ENCODE measurements at regions of chr6 and their contacts with region 1.

Region 1: GRCh38 chr6:4210629-4211423 is 75.5 kb upstream of the ECI2 start:
- DNase-seq: peak; percentile 80
- ATAC-seq: peak; percentile 93
- H3K4me3 ChIP-seq: no peak overlapping the region
- H3K27ac ChIP-seq: no peak overlapping the region
- H3K4me1 ChIP-seq: no peaks in the 10 kb centered on the region
- H3K27me3 ChIP-seq: no peaks in the 10 kb centered on the region
- CTCF ChIP-seq: peak; percentile 79

Region 2: DNA sequence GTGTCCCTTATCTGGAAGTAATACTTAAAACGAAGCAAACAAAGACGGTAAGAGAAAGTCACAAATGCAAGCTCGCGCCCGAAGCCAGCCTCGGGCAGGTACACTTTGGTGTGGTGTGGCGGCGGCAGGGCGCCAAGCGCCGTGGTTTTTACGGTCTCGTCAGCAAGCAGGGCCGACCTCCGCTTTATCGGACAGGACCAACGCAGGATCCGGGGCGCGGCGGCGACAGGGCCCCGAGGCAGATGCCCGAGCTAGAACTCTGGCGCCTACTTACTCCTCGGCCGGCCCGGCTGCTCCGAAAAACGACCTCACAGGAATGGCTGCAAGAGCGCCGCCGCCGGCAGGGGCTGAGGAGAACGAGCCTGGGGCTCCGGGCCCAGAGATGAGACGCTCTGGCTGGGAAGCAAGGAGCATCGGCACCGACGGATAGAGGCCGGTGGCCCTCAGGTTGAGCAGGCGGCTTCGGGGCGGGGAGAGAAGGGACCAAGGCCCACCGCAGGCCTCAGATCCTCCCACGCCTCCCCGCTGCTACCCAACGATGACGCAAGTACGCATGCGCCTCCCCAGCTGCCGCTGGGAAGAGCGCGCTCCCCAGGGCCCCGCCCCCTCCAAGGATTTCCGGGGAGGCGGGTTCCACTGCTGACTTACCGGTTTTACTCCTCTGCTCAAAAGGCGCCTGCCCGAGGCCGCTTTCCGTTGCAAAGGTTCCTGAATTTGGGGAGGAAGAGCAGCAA is 192.5 kb before region 1 on chr6:
- CTCF ChIA-PET with region 1: interaction called, 17 read pairs
- POLR2A ChIA-PET with region 1: no interaction called
- intact Hi-C with region 1: no loop called
- DNase-seq: peak; percentile 98
- ATAC-seq: peak; percentile 66
- H3K4me3 ChIP-seq: peak overlapping the region; percentile 93
- H3K27ac ChIP-seq: peak overlapping the region; percentile 91
- H3K4me1 ChIP-seq: peaks cover 35% of the 10 kb centered on the region
- H3K27me3 ChIP-seq: no peaks in the 10 kb centered on the region
- CTCF ChIP-seq: peak; percentile 53

Region 3: GRCh38 chr6:4055420-4056041 is 155.3 kb before region 1 on chr6:
- CTCF ChIA-PET with region 1: interaction called, 6 read pairs
- POLR2A ChIA-PET with region 1: no interaction called
- intact Hi-C with region 1: loop called (anchors 1 kb)
- DNase-seq: peak; percentile 89
- ATAC-seq: peak; percentile 57
- H3K4me3 ChIP-seq: no peak overlapping the region
- H3K27ac ChIP-seq: peak overlapping the region; percentile 28
- H3K4me1 ChIP-seq: peaks cover 68% of the 10 kb centered on the region
- H3K27me3 ChIP-seq: no peaks in the 10 kb centered on the region
- CTCF ChIP-seq: peak; percentile 83

Region 4: DNA sequence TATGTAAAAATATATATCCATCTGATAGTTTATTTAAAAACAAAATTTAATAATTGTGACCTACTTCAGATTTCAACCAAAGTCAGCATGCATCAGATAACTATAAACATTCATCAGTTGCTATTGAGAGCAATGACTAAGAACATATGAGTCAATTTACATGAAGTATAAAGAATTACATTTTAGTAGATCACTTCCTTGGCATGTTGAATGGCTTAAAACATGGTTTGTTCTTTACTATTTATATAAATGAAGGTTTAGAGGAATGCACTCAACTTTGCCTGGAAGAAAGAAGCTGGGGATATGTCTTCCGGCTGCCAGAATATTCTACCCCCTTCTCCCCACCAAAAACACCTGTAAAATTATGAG is 125.5 kb before region 1 on chr6:
- CTCF ChIA-PET with region 1: no interaction called
- POLR2A ChIA-PET with region 1: no interaction called
- intact Hi-C with region 1: loop called (anchors 1 kb)
- DNase-seq: peak; percentile 68
- ATAC-seq: peak; percentile 88
- H3K4me3 ChIP-seq: no peak overlapping the region
- H3K27ac ChIP-seq: peak overlapping the region; percentile 30; the same call in 1 of the 2 replicates
- H3K4me1 ChIP-seq: peaks cover 5% of the 10 kb centered on the region; the same call in 1 of the 2 replicates
- H3K27me3 ChIP-seq: no peaks in the 10 kb centered on the region
- CTCF ChIP-seq: no peak

Region 5: GRCh38 chr6:4164117-4164442 is 46.7 kb before region 1 on chr6:
- CTCF ChIA-PET with region 1: interaction called, 17 read pairs
- POLR2A ChIA-PET with region 1: no interaction called
- intact Hi-C with region 1: loop called (anchors 1 kb)
- DNase-seq: no peak
- ATAC-seq: peak; percentile 61
- H3K4me3 ChIP-seq: no peak overlapping the region
- H3K27ac ChIP-seq: no peak overlapping the region
- H3K4me1 ChIP-seq: no peaks in the 10 kb centered on the region
- H3K27me3 ChIP-seq: no peaks in the 10 kb centered on the region
- CTCF ChIP-seq: peak; percentile 35; the same call in 1 of the 2 replicates

Region 6: DNA sequence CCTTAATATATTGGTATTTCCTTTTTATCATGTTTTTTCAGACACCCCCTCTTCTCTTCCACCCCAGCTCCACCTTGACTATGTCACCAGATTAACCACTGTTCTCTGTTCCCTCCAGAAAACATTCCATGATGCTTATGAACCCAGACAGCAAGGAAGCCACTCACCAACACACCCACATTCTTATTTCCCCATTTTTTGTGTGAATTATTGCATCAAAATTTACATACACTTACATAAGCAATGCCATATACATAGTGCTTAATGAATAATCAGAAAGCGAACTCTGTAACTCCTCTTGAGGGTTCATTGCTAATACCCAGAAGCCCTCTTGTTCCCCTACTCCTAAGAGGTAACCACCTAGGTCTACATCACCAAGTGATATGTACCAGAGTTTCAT is 383.1 kb after region 1 on chr6:
- CTCF ChIA-PET with region 1: no interaction called
- POLR2A ChIA-PET with region 1: no interaction called
- intact Hi-C with region 1: no loop called
- DNase-seq: no peak
- ATAC-seq: no peak
- H3K4me3 ChIP-seq: no peak overlapping the region
- H3K27ac ChIP-seq: no peak overlapping the region
- H3K4me1 ChIP-seq: peaks cover 8% of the 10 kb centered on the region; the same call in 1 of the 2 replicates
- H3K27me3 ChIP-seq: no peaks in the 10 kb centered on the region
- CTCF ChIP-seq: no peak